Activated naive CD4-positive, alpha-beta T cell treated with anti-CD3 and anti-CD28 coated beads, Interleukin-2, amount 10 ng/mL, durations not matched to agents 7 days and 5 days (primary cell): ENCODE measurements at regions of chr18 and their contacts with region 1.

Region 1: DNA sequence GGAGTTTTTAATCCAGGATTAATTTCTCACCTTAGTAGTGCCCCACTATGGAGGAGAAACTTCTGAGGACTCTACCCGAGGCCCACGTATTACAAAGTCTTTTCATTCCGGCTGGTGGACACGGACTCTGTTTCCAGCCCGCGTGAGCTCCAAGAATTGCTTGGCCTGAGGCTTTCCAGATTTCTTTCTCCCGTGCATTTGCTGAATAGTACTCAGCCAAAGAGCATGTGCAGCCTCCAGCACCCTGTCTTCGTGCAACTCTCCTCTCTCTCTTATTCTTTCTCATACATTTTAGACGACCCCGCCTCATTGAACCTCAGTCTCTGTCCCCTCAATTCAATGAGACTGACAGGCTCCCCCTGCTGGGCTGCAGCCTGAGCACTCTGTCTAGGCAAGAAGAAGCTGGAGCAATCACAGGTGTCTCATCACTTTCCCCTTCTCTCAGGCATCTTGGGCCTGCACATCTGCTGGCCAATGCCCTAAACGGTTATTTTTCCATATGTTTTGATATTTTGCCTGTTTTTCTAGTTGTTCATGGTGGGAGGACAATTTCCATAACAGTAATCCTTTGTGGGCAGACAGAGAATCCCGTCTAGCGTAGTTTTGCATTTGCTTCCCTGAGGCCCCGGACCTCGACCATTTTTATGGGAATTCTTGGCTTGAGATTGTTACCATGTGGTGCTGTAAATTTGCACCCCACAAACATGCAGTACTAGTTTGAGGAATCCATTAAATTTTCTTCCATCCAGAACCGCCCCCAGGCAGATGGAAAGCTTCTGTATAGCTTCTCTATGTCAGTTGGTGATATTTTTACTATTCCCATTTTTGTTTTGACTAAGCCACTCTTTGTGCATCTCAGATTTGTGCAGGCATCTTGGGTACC is 50.1 kb upstream of the LPIN2 start:
- DNase-seq: peak; percentile 89
- H3K4me3 Mint-ChIP-seq: peak overlapping the region; percentile 65
- H3K27ac Mint-ChIP-seq: peak overlapping the region; percentile 100
- H3K4me1 Mint-ChIP-seq: peaks cover 73% of the 10 kb centered on the region
- H3K27me3 Mint-ChIP-seq: no peaks in the 10 kb centered on the region

Region 2: GRCh38 chr18:2971741-2972552 is 91.1 kb before region 1 on chr18:
- CTCF ChIA-PET with region 1: interaction called, 10 read pairs
- DNase-seq: peak; percentile 81
- H3K4me3 Mint-ChIP-seq: peak overlapping the region; percentile 73
- H3K27ac Mint-ChIP-seq: peak overlapping the region; percentile 96
- H3K4me1 Mint-ChIP-seq: peaks cover 92% of the 10 kb centered on the region
- H3K27me3 Mint-ChIP-seq: no peaks in the 10 kb centered on the region

Region 3: DNA sequence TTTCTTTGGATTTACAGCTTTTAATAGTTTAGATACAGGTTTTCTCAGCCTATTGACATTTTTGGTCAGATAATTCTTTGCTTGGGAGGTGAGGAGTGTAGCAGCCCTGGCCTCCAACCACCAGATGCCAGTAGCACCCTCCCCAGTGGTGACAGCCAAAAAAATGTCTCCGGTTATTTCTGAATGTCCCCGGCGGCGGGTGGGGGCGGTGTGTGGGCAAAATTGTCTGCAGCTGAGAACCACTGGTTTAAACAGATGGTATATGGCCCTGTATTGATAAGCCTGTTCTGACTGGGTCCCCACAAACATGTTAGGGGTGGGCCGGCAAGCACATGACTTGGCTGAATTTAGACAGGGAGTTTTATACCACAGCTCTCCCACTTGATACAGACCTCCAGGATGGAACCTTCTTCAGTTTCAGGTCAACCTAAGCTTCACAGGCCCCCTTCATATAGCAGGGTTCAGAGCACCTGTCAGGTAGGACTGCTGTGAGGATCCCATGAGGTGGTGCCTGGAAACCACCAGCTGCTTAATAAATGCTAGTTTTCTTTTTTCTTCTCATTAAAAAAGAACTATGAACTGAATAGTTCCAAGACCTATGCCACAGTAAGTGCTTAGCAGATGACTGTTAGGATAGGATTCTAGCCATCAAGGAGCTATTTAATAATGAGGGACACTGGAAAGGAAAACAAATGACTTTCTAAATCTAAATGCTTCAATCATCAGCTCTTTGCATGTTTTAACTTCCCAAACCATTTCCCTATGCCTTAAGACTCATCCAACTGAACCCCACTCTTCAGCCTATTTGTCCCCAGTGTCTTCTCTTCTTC is 68.2 kb before region 1 on chr18:
- CTCF ChIA-PET with region 1: interaction called, 253 read pairs
- DNase-seq: peak; percentile 82
- H3K4me3 Mint-ChIP-seq: no peak overlapping the region
- H3K27ac Mint-ChIP-seq: peak overlapping the region; percentile 6
- H3K4me1 Mint-ChIP-seq: peaks cover 78% of the 10 kb centered on the region
- H3K27me3 Mint-ChIP-seq: no peaks in the 10 kb centered on the region

Region 4: GRCh38 chr18:3037423-3037915 is 25.6 kb before region 1 on chr18:
- CTCF ChIA-PET with region 1: interaction called, 16 read pairs
- DNase-seq: peak; percentile 50
- H3K4me3 Mint-ChIP-seq: no peak overlapping the region
- H3K27ac Mint-ChIP-seq: peak overlapping the region; percentile 56
- H3K4me1 Mint-ChIP-seq: peaks cover 31% of the 10 kb centered on the region
- H3K27me3 Mint-ChIP-seq: peaks cover 14% of the 10 kb centered on the region

Region 5: GRCh38 chr18:3129053-3129864 is 66.2 kb after region 1 on chr18:
- CTCF ChIA-PET with region 1: interaction called, 38 read pairs
- DNase-seq: peak; percentile 89
- H3K4me3 Mint-ChIP-seq: no peak overlapping the region
- H3K27ac Mint-ChIP-seq: no peak overlapping the region
- H3K4me1 Mint-ChIP-seq: peaks cover 10% of the 10 kb centered on the region
- H3K27me3 Mint-ChIP-seq: peaks cover 3% of the 10 kb centered on the region

Region 6: GRCh38 chr18:3217948-3218647 is 155.1 kb after region 1 on chr18:
- CTCF ChIA-PET with region 1: no interaction called
- DNase-seq: no peak
- H3K4me3 Mint-ChIP-seq: no peak overlapping the region
- H3K27ac Mint-ChIP-seq: no peak overlapping the region
- H3K4me1 Mint-ChIP-seq: peaks cover 8% of the 10 kb centered on the region
- H3K27me3 Mint-ChIP-seq: no peaks in the 10 kb centered on the region

Region 7: DNA sequence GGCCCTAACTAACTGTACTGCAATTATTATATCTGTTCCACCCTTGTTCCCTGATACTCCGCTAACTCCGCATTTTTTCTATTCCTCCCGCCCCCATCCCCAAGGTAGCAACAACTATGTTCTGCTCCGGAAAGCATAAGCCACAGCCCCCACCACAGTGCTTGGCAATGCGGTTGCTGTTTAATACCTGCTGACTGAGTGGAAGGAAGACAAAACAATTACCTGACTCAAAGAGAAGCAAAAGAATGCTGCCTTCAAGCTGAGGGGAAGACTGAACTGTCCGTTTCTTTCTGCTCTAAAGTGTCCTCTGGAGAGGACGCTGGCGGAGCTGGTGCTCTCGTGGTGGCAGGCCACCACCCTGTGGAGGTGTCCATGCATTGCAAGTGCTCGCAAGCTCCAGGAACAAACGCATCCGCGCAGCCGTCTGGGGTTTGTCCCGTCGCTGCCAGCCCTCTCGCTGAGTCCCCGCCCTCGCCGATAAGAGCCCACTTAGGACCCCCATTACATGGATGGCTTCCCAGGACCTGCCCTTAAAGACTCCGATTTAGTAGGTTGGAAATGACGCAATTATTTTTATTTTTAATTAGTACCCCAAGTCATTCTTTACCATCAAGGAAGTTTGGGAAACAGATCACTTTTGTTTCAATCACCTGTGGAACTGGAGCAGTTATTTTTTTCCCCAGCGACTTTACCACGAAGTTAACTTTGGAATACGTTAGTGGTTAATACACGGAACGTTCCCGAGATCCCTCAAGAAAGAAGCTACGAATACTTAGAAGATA is 183.0 kb after region 1 on chr18:
- CTCF ChIA-PET with region 1: interaction called, 27 read pairs
- DNase-seq: peak; percentile 87
- H3K4me3 Mint-ChIP-seq: peak overlapping the region; percentile 88
- H3K27ac Mint-ChIP-seq: peak overlapping the region; percentile 99
- H3K4me1 Mint-ChIP-seq: peaks cover 28% of the 10 kb centered on the region
- H3K27me3 Mint-ChIP-seq: peaks cover 7% of the 10 kb centered on the region